CD8-positive, alpha-beta T cell (primary cell): ENCODE measurements at regions of chr12 and their contacts with region 1.

Region 1: DNA sequence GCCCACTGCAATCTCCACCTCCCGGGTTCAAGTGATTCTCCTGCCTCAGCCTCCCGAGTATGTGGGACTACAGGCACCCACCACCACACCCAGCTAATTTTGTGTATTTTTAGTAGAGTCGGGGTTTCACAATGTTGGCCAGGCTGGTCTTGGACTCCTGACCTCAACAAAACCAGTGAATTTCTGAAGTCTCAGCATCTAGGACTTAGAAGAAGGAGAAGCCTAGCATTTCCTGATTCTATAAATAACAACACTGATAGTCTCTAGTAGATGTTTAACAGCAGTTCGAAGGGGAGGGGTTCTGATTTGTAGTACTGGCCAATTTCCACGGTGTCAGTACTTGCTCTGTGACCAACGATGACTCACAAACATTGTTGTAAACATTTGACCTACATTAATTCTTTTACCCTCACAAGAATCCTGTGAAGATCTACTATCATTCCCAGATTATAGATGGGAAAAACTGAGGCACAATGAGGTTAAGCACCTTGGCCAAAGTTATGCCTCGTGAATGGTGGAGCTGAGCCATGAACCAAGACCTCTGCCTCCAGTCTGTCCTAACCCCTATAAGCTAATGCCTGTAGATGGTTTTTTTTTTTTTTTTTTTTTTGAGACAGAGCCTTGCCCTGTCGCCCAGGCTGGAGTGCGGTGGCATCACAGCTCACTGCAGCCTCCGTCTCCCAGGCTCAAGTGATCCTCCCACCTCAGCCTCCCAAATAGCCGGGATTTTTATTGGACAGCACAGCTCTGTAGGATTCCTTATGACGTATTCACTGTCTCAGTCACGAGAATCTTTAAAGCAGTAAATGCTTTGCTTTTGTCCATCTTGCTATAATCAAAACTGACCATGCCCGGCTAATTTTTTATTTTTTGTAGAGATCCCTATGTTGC is 5.2 kb downstream of the P2RX4 start:
- DNase-seq: no peak
- ATAC-seq: no peak
- H3K4me3 ChIP-seq: no peak overlapping the region
- H3K4me3 Mint-ChIP-seq: no peak overlapping the region
- H3K27ac ChIP-seq: peak overlapping the region in 1 of 2 experiments; percentile 28
- H3K27ac Mint-ChIP-seq: peak overlapping the region; percentile 66
- H3K4me1 ChIP-seq: peaks cover 11% of the 10 kb centered on the region
- H3K4me1 Mint-ChIP-seq: peaks cover 23% of the 10 kb centered on the region
- H3K27me3 ChIP-seq: no peaks in the 10 kb centered on the region
- H3K27me3 Mint-ChIP-seq: no peaks in the 10 kb centered on the region
- CTCF ChIP-seq: no peak

Region 2: DNA sequence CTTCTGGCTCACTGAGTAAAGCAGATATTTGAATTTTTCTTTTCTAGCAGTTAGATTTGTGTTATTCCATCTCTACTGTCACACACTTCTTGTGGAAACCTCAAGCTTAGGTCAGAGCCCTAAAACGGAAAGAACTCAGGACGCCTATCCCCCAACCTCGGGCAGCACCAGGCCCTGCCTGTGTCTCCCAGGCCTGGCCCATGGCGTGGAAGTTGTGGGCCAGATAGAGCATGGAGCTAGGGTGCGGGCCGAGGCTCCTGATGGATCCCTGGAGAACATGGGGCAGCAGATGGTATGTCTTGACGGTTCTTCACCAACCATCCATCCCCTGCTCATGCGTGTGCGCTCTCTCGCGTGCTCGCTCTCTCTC is 15.4 kb after region 1 on chr12:
- CTCF ChIA-PET with region 1: interaction called, 24 read pairs
- POLR2A ChIA-PET with region 1: no interaction called
- intact Hi-C with region 1: loop called in 1 of 2 experiments (anchors 2 kb)
- DNase-seq: no peak
- ATAC-seq: no peak
- H3K4me3 ChIP-seq: no peak overlapping the region
- H3K4me3 Mint-ChIP-seq: no peak overlapping the region
- H3K27ac ChIP-seq: no peak overlapping the region
- H3K27ac Mint-ChIP-seq: no peak overlapping the region
- H3K4me1 ChIP-seq: peaks cover 31% of the 10 kb centered on the region
- H3K4me1 Mint-ChIP-seq: peaks cover 21% of the 10 kb centered on the region
- H3K27me3 ChIP-seq: no peaks in the 10 kb centered on the region
- H3K27me3 Mint-ChIP-seq: no peaks in the 10 kb centered on the region
- CTCF ChIP-seq: no peak

Region 3: DNA sequence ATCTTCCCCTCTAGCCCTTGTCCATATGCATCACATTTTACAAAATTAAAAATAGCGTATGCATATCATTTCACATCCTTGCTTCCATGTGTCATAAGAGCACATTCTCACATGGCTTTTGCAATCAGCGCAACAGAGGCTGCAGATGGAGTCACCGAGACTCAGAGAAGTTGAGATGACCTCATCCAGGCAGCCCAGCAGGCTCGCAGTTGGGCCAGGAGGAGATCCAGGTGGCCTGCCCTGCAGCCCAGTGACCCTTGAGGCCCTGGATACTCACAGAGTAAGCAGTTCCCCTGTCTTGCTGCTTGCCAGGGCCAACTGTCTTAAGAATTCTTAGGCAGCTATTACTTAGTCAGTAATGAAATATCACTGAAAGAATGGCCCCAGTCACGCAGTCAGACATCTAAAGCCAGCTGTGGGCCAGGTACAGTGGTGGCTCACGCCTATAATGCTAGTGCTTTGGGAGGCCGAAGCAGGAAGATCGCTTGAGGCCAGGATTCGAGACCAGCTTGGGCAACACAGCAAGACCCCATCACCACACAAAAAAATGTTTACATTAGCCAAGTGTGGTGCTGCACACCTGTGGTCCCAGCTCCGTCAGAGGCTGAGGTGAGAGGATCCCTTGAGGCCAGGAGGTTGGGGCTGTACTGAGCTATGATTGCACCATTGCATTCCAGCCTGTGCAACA is 72.3 kb after region 1 on chr12:
- CTCF ChIA-PET with region 1: no interaction called
- POLR2A ChIA-PET with region 1: no interaction called
- intact Hi-C with region 1: no loop called
- DNase-seq: no peak
- ATAC-seq: no peak
- H3K4me3 ChIP-seq: no peak overlapping the region
- H3K4me3 Mint-ChIP-seq: no peak overlapping the region
- H3K27ac ChIP-seq: no peak overlapping the region
- H3K27ac Mint-ChIP-seq: no peak overlapping the region
- H3K4me1 ChIP-seq: no peaks in the 10 kb centered on the region
- H3K4me1 Mint-ChIP-seq: peaks cover 7% of the 10 kb centered on the region
- H3K27me3 ChIP-seq: no peaks in the 10 kb centered on the region
- H3K27me3 Mint-ChIP-seq: no peaks in the 10 kb centered on the region
- CTCF ChIP-seq: no peak